GM12878 (cell line): ENCODE measurements at regions of chr20 and their contacts with region 1.

Region 1: DNA sequence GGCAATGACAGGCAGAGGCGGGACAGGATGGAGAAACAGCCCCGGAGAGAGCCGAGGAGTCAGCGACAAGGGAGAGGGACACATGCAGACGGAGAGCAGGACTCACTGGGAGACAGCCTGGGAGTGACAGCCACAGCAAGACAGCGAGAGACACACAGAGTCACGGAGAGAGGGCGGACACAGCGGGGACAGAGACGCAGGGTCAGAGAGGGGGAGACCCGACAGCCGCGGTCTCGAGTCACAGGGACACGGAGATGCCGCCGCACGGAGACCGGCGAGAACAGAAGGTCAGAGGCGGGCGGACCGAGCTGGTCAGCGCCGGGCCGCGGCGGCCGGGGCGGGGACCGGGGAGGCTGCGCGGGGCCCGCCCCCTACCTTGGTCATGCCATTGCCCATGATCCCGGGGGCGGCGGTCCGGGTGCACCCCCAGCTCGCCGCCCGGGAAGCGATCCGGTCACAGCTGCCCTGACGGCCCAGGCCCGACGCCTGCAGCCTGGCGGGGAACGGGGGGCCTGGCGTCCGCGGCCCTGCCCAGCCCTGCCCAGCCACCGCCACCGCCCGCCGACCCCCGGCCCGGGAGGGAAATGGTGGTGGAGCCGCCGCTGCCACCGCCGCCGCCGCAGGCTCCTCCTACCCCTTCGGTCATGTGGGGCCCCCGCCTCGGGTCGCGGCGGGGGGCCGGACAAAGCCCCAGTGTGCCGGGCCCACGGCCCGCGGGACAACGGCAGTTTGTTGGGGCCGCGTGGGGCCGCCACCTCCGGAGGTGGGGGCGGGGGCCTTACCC is at the starts of genes DUSP15 and TTLL9:
- DNase-seq: no peak
- ATAC-seq: peak; percentile 65
- H3K4me3 ChIP-seq: peak within 1 kb of the TSS; percentile 41; the same call in 1 of the 2 replicates
- H3K27ac ChIP-seq: no peak within 1 kb of the TSS
- H3K4me1 ChIP-seq: peaks cover 13% of the 10 kb centered on the region
- H3K27me3 ChIP-seq: peaks cover 6 to 13% of the 10 kb centered on the region in 2 experiments
- CTCF ChIP-seq: no peak
- EP300 ChIP-seq: no peak
- POLR2A ChIP-seq: peak; percentile 25; the same call in 1 of the 2 replicates
- RAD21 ChIP-seq: no peak
- polyA plus RNA-seq, gene DUSP15: 0.06 TPM in 1 of 2 experiments, not detected in the other
- polyA plus RNA-seq, gene TTLL9: 0.03 TPM in 1 of 2 experiments, not detected in the other

Region 2: GRCh38 chr20:31923388-31924331 is 53.5 kb after region 1 on chr20:
- CTCF ChIA-PET with region 1: interaction called, 7 read pairs
- POLR2A ChIA-PET with region 1: interaction called, 6 read pairs
- RAD21 ChIA-PET with region 1: interaction called, 5 read pairs
- SMC1A ChIA-PET with region 1: interaction called, 11 read pairs
- in situ Hi-C with region 1: no loop called
- intact Hi-C with region 1: no loop called
- DNase-seq: peak; percentile 47
- ATAC-seq: peak; percentile 92
- H3K4me3 ChIP-seq: no peak overlapping the region
- H3K27ac ChIP-seq: no peak overlapping the region
- H3K4me1 ChIP-seq: peaks cover 11% of the 10 kb centered on the region
- H3K27me3 ChIP-seq: no peaks in the 10 kb centered on the region
- CTCF ChIP-seq: 0 out of 6 replicates have a peak, but pooled peaks of 1 of the 3 experiments have one; percentile 4
- EP300 ChIP-seq: peak in 1 of 2 experiments; percentile 72; a peak in 2 of 4 replicates
- POLR2A ChIP-seq: no peak
- RAD21 ChIP-seq: no peak

Region 3: DNA sequence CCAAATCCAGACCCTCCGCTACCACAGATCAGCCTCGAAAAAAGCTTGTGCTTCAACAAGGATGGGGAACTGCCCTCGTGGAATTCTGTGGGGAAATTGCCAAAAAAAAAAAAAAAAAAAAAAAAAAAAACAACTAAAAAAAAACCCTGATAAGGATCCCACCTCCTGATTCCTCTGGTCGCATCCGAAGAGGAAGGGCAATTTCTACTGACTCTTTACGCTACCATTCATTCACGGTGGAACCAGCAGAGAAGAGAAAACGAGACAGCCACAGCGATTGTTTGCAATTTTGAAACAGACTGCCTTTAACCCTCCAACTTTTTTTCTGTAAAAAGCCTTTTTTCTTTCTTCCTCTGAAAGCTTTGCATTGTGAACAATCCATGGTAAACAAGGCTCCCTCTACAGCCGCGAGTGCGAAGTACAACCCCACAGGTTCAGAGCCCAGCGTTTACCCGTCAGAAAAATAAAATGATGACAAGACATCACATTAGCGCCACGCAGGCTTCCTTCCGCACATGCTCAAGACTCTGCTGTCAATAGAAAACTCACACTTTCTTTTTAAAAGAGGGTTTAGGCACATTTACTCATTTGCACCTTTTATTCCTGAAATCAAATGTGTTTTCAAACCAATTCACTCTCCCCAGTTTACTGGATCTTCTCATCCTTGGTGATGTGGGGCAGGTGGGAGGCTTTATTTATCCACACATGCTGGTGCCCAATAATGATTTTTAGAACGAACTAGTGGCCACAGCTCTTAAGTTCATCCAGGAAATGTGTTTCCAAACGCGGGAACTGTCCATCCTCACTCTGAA is 615.0 kb after region 1 on chr20:
- CTCF ChIA-PET with region 1: no interaction called
- POLR2A ChIA-PET with region 1: interaction called, 12 read pairs
- RAD21 ChIA-PET with region 1: no interaction called
- SMC1A ChIA-PET with region 1: no interaction called
- in situ Hi-C with region 1: no loop called
- intact Hi-C with region 1: no loop called
- DNase-seq: peak; percentile 30
- ATAC-seq: peak; percentile 90
- H3K4me3 ChIP-seq: peak overlapping the region; percentile 69
- H3K27ac ChIP-seq: no peak overlapping the region
- H3K4me1 ChIP-seq: peaks cover 5% of the 10 kb centered on the region
- H3K27me3 ChIP-seq: no peaks in the 10 kb centered on the region
- CTCF ChIP-seq: peak; percentile 75 to 89 (median 78)
- EP300 ChIP-seq: no peak
- POLR2A ChIP-seq: no peak
- RAD21 ChIP-seq: peak; percentile 61